Calu3 (cell line): ENCODE measurements at regions of chr17 and their contacts with region 1.

Region 1: DNA sequence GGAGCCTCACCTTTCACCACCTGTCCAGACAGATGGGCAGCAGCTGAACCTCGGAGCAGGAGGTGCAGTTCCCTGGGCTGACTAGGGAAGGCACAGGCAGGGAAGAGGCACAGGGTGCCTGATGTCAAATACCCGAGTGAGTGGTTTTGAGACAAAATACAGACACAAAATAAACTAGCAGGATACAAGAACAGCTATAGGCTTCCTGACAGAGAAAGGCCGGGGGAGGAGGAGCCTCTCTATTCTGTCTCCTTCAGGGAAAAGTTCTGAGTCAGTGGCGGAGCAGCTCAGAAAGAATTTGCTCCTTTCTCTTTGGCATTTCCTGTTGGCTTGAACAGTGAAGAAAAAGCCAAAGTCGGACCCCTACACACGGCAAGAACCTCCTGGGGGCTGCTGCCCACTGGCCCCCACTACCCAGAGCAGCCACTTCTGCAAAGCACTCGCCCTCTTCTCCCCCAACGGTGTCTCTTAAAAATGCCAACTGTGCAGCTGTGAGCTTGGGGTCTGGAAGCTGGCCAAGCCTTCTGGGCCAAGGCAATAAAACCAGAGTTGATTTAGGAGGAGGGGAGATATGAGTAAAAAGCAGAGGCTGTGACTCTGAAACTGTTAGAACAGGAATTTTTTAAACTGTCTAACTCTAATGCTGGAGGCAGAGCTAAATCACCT is 14.4 kb upstream of the FAAP100 start:
- DNase-seq: peak; percentile 69
- H3K4me3 Mint-ChIP-seq: peak overlapping the region; percentile 56
- H3K27ac Mint-ChIP-seq: peak overlapping the region; percentile 57
- H3K4me1 Mint-ChIP-seq: peaks cover 35% of the 10 kb centered on the region
- H3K27me3 Mint-ChIP-seq: no peaks in the 10 kb centered on the region
- CTCF ChIP-seq: no peak

Region 2: DNA sequence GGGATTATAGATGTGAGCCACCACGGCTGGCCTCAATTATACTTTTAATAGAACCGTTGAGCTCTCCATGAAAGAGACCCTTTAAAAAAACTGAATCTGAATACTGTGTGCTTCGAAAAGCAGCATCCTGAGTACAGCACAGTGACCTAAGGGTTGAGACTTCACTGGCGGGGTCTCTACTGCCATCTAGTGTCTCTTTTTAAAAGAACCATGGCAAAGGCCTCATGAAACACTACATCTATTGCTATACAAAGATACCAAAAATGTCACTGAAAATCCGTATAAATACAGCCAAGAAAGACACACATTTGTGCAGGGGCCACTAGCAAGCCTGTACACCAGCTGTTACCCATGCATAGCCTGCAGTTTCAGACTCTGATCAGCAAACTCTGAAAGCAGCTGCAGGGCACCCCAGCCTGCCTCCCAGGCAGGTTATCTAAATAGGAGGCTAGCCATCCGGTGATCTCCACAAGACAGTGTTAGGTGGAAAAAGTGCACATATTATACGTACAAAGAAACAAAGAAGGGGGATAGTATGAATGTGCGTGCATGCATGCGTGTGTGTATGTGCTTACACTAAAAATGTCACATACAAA is 35.0 kb after region 1 on chr17:
- CTCF ChIA-PET with region 1: interaction called, 4 read pairs
- intact Hi-C with region 1: loop called (anchors 1 kb)
- DNase-seq: peak; percentile 55
- H3K4me3 Mint-ChIP-seq: no peak overlapping the region
- H3K27ac Mint-ChIP-seq: peak overlapping the region; percentile 35
- H3K4me1 Mint-ChIP-seq: peaks cover 7% of the 10 kb centered on the region
- H3K27me3 Mint-ChIP-seq: no peaks in the 10 kb centered on the region
- CTCF ChIP-seq: peak; percentile 64